ENCODE measurements at regions of chr21 and their contacts with region 1.

Region 1: DNA sequence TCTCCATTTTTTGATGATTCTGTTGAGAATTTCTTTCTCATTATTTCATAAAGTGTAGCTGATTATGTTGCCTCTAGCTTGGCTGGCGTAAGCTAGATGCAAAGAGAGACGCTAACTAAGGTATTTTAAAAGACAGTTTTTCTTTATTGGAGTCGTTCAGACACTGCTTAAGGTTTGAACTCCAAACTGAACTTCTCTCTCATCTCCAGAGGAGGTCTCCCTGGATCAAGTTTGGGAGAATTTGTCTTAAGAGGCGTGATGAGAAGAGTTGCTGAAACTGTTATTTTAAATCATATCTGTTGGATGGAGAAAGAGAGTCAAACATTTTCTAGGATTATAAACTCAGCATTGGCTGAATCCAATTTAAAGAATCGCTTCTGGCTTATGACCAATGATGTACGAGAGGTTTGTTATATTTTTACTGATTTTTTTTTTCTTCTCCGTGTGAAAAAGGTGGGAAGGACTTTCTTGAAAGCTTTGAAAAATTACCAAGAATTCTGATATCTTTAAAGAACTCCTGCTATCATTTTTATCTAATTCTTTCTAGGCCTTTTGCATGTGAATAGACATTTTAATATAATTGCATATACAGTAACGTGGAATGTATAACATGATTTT is 34.0 kb downstream of the MAP3K7CL start:
- DNase-seq: no peak
- ATAC-seq: peak; percentile 74

Region 2: DNA sequence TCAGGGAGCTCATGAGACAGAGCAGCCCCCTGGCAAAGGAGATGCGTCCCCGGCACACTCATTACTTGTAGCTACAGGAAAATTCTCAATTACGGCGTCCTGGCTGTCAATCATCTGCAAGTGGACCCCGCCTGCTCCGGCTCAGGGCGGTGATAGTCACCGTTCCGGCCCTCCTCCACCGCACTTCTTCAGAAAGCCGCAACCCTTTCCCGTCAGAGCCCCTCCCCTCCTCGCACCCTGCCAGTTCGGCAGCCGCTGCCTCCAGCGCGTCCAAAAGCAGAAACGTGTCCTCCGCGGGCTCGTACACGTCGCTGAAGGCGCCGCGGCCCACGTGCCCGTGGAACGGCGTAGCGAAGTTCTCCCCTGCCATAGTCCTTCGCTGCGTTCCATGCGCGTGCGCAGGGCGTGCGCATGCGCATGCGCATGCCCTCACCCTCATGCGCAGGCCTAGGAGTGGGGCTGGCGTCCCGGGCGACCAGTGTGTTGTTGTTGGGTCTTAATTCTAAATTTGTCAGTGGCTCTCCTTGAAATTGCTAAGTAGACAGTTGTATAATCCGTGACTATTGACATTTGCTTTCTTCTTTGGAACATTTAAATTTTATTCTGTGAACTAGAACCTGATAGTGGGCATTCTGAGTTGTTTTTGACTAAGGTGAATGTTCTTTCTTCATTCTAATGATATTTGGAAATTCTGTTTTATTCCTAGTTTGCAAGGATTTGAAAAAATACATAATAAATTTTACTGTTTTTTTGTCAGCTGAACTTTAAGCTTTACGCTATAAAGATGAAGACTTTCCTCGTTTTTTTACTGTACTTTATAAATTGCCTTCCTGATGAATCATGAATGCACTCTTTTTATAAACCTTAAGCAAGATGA is 279.2 kb before region 1 on chr21:
- intact Hi-C with region 1: no loop called
- DNase-seq: peak; percentile 93
- ATAC-seq: peak; percentile 99

Region 3: GRCh38 chr21:29133796-29134195 is 30.6 kb before region 1 on chr21:
- intact Hi-C with region 1: no loop called
- DNase-seq: no peak
- ATAC-seq: no peak

Region 4: GRCh38 chr21:29342363-29342957 is 178.0 kb after region 1 on chr21:
- intact Hi-C with region 1: loop called (anchors 10 kb)
- DNase-seq: peak; percentile 81
- ATAC-seq: peak; percentile 95

Region 5: GRCh38 chr21:29372063-29372802 is 207.8 kb after region 1 on chr21:
- intact Hi-C with region 1: loop called (anchors 2 kb)
- DNase-seq: no peak
- ATAC-seq: peak; percentile 94

Measured in left ventricle myocardium superior (tissue), 1 donor.